Calu3 (cell line): ENCODE measurements at regions of chr3 and their contacts with region 1.

Region 1: DNA sequence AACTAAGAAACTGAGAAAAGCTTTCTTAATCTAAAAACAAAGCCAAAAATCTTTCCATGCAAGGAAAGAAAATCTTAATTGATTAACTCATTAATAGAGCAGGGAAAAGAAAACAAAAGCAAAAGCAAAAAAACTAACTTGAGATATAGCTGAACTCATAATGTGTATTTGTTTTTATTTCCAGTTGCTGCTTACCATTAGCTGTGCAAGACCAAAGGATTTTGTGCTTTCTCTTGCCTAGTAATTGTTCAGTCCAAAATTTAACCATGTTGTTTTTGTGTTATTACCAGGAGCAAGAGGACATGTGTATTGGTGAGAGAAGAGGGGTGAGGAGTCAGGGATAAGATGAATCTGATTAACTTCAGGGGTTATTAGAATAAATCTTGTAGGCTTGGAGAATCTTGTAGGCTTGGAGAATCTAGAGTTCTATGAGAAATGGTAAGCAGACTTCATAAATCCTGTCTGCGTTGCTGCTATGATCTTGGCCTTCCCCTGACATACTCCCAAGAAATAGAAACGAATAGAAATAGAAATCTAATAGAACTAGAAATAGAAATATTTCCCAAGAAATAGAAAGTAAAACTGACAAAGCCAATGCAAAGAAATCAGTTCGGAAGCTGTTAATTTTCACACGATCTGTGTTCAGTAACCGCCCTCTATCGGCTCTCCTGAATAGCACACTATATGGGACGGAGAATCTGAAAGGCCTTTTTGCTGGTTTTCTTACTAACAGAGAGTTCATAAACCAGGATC is 72.6 kb upstream of the TNFSF10 start:
- DNase-seq: peak; percentile 67
- H3K4me3 Mint-ChIP-seq: peak overlapping the region; percentile 70
- H3K27ac Mint-ChIP-seq: peak overlapping the region; percentile 95
- H3K4me1 Mint-ChIP-seq: peaks cover 68% of the 10 kb centered on the region
- H3K27me3 Mint-ChIP-seq: no peaks in the 10 kb centered on the region
- CTCF ChIP-seq: peak; percentile 83

Region 2: DNA sequence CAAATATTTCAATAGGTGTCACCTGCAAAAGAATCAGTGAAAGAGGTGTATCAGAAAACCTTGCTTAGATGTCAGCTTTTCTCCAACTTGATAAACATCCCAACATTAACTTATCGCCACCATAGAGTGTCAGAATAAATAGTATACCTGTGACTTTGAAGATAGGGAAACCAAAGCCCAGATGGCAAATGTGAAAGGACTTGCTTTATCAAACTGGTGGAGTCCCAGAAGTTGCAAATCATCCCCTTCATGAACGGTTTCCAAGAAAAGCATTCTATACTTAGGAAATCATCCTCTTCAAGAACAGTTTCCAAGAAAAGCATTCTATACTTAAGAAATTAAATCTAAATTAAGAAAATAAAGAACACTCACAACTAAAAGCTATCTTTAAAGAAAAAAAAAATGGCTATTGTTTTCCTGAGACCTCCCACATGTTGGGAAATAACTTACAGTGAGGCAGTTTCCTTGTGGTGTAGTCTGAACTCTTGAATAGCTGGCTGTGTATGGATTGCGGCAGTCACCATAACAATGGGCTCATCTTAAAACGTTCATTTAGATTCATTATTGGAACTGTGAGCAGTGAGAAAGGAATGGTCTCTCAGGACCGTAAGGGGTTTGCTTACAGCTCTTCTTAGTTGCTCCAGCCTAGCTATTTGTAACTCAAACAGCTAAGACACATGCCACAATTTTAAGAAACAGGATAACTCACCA is 204.1 kb before region 1 on chr3:
- CTCF ChIA-PET with region 1: no interaction called
- intact Hi-C with region 1: loop called (anchors 5 kb)
- DNase-seq: no peak
- H3K4me3 Mint-ChIP-seq: no peak overlapping the region
- H3K27ac Mint-ChIP-seq: peak overlapping the region; percentile 30
- H3K4me1 Mint-ChIP-seq: peaks cover 22% of the 10 kb centered on the region
- H3K27me3 Mint-ChIP-seq: no peaks in the 10 kb centered on the region
- CTCF ChIP-seq: no peak

Region 3: GRCh38 chr3:172476347-172476746 is 119.5 kb before region 1 on chr3:
- CTCF ChIA-PET with region 1: interaction called, 11 read pairs
- intact Hi-C with region 1: no loop called
- DNase-seq: peak; percentile 23
- H3K4me3 Mint-ChIP-seq: peak overlapping the region; percentile 79
- H3K27ac Mint-ChIP-seq: peak overlapping the region; percentile 82
- H3K4me1 Mint-ChIP-seq: peaks cover 26% of the 10 kb centered on the region
- H3K27me3 Mint-ChIP-seq: no peaks in the 10 kb centered on the region
- CTCF ChIP-seq: no peak

Region 4: GRCh38 chr3:172522871-172523818 is 72.7 kb before region 1 on chr3 and contains the start of gene TNFSF10:
- CTCF ChIA-PET with region 1: interaction called, 36 read pairs
- intact Hi-C with region 1: loop called (anchors 2 kb)
- DNase-seq: peak; percentile 82
- H3K4me3 Mint-ChIP-seq: peak within 1 kb of the TSS; percentile 76
- H3K27ac Mint-ChIP-seq: peak within 1 kb of the TSS; percentile 73
- H3K4me1 Mint-ChIP-seq: peaks cover 37% of the 10 kb centered on the region
- H3K27me3 Mint-ChIP-seq: no peaks in the 10 kb centered on the region
- CTCF ChIP-seq: no peak
- total RNA-seq, gene TNFSF10: 41.4 and 58.7 TPM in 2 replicates

Region 5: DNA sequence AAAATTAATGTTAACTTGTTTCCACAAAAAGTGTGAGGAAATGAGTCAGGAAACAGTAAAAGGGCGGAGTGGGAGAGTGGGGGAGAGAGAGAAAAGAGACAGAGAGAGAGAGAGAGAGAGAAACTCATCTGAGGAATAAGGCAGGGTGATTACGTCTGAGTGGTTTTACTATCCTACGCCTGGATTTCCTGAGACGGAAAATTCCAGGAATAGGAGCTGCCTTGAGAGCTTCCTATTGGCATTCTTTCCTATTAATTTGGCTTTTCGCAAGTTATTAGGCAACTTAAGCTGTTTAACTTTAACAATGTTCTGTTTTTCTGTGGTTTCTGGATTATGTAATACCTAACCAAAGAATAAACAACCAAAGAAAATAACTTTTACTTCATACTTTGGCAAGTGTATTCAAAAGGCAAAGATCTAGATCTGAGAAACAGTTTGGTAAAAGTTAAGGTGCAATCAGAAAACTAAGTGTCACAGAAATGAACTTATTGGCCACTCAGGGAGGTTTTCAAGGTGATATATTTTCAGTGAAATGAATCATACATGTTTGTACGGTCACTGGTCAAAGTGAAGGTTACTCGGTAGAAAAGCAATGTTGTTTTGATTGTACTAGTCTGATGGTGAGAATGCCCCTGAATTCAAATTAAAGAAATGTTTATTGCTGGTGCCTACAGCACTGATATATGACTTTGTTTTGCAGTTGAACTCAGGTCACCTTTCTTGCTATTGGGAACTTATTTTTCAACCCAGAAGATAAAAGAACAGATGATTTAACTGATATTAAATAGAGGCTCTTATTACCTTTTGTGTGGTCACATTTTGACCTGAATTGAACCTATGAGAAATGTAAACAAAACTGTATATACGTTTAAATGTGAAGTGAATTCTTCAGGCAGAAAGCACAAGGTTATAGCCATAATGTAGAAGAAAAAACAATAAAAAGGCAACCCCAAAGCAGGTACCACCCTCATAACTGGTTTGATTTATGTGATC is 32.6 kb before region 1 on chr3:
- CTCF ChIA-PET with region 1: interaction called, 25 read pairs
- intact Hi-C with region 1: loop called (anchors 1 kb)
- DNase-seq: peak; percentile 42
- H3K4me3 Mint-ChIP-seq: peak overlapping the region; percentile 27
- H3K27ac Mint-ChIP-seq: peak overlapping the region; percentile 69
- H3K4me1 Mint-ChIP-seq: peaks cover 44% of the 10 kb centered on the region
- H3K27me3 Mint-ChIP-seq: no peaks in the 10 kb centered on the region
- CTCF ChIP-seq: no peak

Region 6: DNA sequence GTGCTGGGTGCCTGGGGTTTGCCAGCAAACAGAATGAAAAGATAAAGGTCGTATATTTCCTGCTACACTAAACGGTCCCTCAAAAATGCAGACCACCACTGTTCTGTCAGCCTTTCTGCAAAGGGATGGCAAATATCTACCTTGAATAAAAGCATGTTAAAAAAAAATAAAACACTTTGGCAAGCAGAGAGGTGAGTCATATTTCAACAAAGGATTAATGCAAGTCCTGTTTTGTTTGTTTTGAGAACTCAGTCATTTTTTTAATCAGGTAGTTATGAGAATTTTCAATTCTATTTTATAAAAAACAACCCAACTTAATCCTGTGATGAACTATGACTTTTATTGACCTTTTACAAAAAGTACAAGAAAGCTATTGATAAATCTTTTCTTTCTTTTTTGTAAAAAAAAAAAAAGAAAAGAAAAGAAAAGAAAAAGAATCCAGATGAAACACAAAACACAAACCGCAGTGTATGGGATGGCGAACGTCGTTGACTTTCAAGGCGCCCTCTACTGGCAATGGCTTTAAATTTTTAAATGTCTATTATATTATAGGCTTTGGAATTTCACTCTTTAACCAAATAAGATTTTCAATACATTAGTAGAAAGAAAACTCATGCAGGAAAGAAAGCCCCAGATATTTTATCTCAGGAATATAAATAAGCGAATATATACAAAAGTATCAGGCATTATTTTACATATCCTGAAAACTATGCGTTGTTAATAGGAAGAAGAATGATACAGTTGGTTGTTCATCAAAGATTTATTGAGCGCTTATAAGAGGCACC is 27.3 kb after region 1 on chr3:
- CTCF ChIA-PET with region 1: interaction called, 10 read pairs
- intact Hi-C with region 1: loop called (anchors 2 kb)
- DNase-seq: peak; percentile 74
- H3K4me3 Mint-ChIP-seq: no peak overlapping the region
- H3K27ac Mint-ChIP-seq: peak overlapping the region; percentile 63
- H3K4me1 Mint-ChIP-seq: peaks cover 53% of the 10 kb centered on the region
- H3K27me3 Mint-ChIP-seq: no peaks in the 10 kb centered on the region
- CTCF ChIP-seq: peak; percentile 61

Region 7: GRCh38 chr3:172750368-172751174 is 154.8 kb after region 1 on chr3 and contains the start of gene ECT2:
- CTCF ChIA-PET with region 1: interaction called, 12 read pairs
- intact Hi-C with region 1: no loop called
- DNase-seq: peak; percentile 100
- H3K4me3 Mint-ChIP-seq: peak within 1 kb of the TSS; percentile 85
- H3K27ac Mint-ChIP-seq: peak within 1 kb of the TSS; percentile 97
- H3K4me1 Mint-ChIP-seq: peaks cover 65% of the 10 kb centered on the region
- H3K27me3 Mint-ChIP-seq: no peaks in the 10 kb centered on the region
- CTCF ChIP-seq: peak; percentile 89
- total RNA-seq, gene ECT2: 170 and 201 TPM in 2 replicates